CD8-positive, alpha-beta T cell (primary cell): ENCODE measurements at regions of chr17 and their contacts with region 1.

Region 1: GRCh38 chr17:44775136-44775837 is 16.5 kb downstream of the ADAM11 start:
- DNase-seq: peak in 8 of 9 experiments; percentile 92 to 99 (median 98)
- ATAC-seq: peak; percentile 92
- H3K4me3 ChIP-seq: peak overlapping the region; percentile 68 to 97
- H3K4me3 Mint-ChIP-seq: peak overlapping the region; percentile 91
- H3K27ac ChIP-seq: peak overlapping the region in 1 of 2 experiments; percentile 11
- H3K27ac Mint-ChIP-seq: peak overlapping the region; percentile 60
- H3K4me1 ChIP-seq: peaks cover 17% of the 10 kb centered on the region
- H3K4me1 Mint-ChIP-seq: peaks cover 16% of the 10 kb centered on the region
- H3K27me3 ChIP-seq: peaks cover 0 to 10% of the 10 kb centered on the region in 2 experiments
- H3K27me3 Mint-ChIP-seq: peaks cover 7% of the 10 kb centered on the region
- CTCF ChIP-seq: peak; percentile 61

Region 2: GRCh38 chr17:44672479-44673093 is 102.7 kb before region 1 on chr17:
- CTCF ChIA-PET with region 1: no interaction called
- POLR2A ChIA-PET with region 1: no interaction called
- intact Hi-C with region 1: no loop called
- DNase-seq: peak in 1 of 9 experiments; percentile 17
- ATAC-seq: no peak
- H3K4me3 ChIP-seq: no peak overlapping the region
- H3K4me3 Mint-ChIP-seq: no peak overlapping the region
- H3K27ac ChIP-seq: no peak overlapping the region
- H3K27ac Mint-ChIP-seq: no peak overlapping the region
- H3K4me1 ChIP-seq: no peaks in the 10 kb centered on the region
- H3K4me1 Mint-ChIP-seq: no peaks in the 10 kb centered on the region
- H3K27me3 ChIP-seq: no peaks in the 10 kb centered on the region
- H3K27me3 Mint-ChIP-seq: no peaks in the 10 kb centered on the region
- CTCF ChIP-seq: peak; percentile 31

Region 3: DNA sequence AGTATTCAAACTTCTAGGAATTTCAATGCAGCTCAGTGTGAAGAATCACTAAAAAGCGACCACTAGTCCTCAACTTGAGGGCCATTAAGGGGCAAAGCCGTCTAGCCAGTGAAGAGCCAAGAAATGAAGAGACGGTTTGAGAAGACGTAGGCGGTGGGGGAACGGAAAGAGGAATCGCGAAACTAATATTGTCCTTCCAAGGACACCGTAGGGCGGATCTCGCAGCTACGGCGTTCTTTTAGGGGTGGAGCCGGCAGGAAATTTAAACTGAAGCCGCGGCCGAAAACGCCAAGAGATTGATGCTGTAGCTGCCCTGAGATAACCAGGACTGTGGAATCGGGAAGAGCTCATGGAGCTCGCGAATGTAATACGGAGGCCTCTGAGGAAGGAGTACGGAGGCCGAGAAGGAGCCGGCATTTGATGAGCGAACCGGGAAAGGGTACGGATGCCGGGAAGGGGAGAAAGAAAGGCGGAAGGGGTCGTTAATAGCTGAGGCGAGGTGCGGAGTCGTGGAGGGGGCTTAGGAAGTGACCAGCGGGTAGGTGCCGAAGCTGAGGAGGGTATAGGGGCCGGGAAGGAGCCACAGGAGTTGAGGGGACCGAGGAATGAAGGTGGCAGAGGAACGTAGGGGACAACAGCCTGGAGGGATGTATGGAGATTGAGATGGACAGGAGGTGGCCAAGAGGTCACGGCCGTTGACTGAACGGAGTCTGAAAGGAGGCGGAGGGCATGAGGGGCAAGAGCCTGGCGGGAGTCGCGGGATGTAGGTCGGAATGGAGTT is 66.7 kb before region 1 on chr17 and contains the start of gene DBF4B:
- CTCF ChIA-PET with region 1: interaction called, 4 read pairs
- POLR2A ChIA-PET with region 1: interaction called, 3 read pairs
- intact Hi-C with region 1: loop called (anchors 1 kb)
- DNase-seq: peak; percentile 69 to 95 (median 82)
- ATAC-seq: peak; percentile 98
- H3K4me3 ChIP-seq: peak within 1 kb of the TSS; percentile 92 to 95
- H3K4me3 Mint-ChIP-seq: no peak within 1 kb of the TSS
- H3K27ac ChIP-seq: peak within 1 kb of the TSS; percentile 51 to 55
- H3K27ac Mint-ChIP-seq: no peak within 1 kb of the TSS
- H3K4me1 ChIP-seq: peaks cover 13% of the 10 kb centered on the region
- H3K4me1 Mint-ChIP-seq: peaks cover 5% of the 10 kb centered on the region
- H3K27me3 ChIP-seq: no peaks in the 10 kb centered on the region
- H3K27me3 Mint-ChIP-seq: peaks cover 6% of the 10 kb centered on the region
- CTCF ChIP-seq: no peak
- total RNA-seq, gene DBF4B: 0.71 to 1.3 TPM

Region 4: GRCh38 chr17:44878627-44879221 is 103.4 kb after region 1 on chr17:
- CTCF ChIA-PET with region 1: interaction called, 33 read pairs
- POLR2A ChIA-PET with region 1: no interaction called
- intact Hi-C with region 1: loop called in 1 of 2 experiments (anchors 1 kb)
- DNase-seq: peak in 5 of 9 experiments; percentile 19 to 44 (median 27)
- ATAC-seq: no peak
- H3K4me3 ChIP-seq: no peak overlapping the region
- H3K4me3 Mint-ChIP-seq: no peak overlapping the region
- H3K27ac ChIP-seq: no peak overlapping the region
- H3K27ac Mint-ChIP-seq: no peak overlapping the region
- H3K4me1 ChIP-seq: no peaks in the 10 kb centered on the region
- H3K4me1 Mint-ChIP-seq: no peaks in the 10 kb centered on the region
- H3K27me3 ChIP-seq: no peaks in the 10 kb centered on the region
- H3K27me3 Mint-ChIP-seq: no peaks in the 10 kb centered on the region
- CTCF ChIP-seq: peak; percentile 34

Region 5: DNA sequence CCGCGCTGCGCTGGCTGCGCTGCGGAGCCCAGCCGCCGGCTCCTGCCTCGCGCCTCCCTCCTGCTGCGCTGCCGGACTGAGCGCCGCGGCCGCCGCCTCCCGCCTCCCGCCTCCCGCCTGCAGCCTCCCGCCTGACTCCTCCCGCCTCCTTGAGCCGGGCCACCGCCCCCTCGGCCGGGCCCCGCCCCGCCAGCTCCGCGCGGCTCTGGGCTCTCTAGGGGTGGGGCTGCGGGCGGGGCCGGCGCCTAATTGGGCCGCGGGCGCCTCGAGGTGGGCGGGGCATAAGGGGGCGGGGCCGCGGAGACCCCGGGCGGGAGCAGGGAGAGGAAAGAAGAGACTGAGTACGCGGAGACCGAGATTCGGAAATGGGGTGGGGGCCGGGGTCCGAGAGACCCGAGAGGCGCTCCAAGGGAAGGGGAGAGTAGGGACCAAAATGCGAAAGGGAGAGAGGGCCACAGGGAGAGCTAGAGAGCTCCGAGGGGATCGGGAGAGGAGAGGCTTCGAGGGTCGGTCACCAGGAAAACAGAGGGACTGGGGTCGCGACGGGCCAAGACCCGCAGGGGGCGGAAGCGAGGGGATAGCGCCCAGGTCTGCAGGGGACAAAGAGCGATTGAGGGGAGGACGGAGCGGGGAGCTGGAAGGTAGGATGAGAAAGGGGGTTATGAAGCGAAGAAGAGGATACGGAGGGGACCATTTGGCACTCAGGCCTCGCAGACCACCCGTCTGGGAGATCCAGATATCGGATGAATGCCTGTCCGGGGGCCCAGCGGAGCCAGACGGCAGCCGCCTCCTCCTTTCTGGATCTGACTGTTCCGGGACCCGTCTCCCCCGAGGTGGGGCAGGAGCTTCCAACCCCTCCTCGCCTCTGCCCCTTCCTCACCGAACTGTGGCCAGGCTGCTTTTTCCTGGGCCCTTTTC is 193.2 kb after region 1 on chr17 and contains the start of gene C1QL1:
- CTCF ChIA-PET with region 1: interaction called, 3 read pairs
- POLR2A ChIA-PET with region 1: no interaction called
- intact Hi-C with region 1: loop called in 1 of 2 experiments (anchors 5 kb)
- DNase-seq: peak; percentile 67 to 91 (median 82)
- ATAC-seq: peak; percentile 93
- H3K4me3 ChIP-seq: peak within 1 kb of the TSS; percentile 41 to 55
- H3K4me3 Mint-ChIP-seq: peak within 1 kb of the TSS; percentile 76
- H3K27ac ChIP-seq: no peak within 1 kb of the TSS
- H3K27ac Mint-ChIP-seq: no peak within 1 kb of the TSS
- H3K4me1 ChIP-seq: peaks cover 29% of the 10 kb centered on the region
- H3K4me1 Mint-ChIP-seq: peaks cover 36% of the 10 kb centered on the region
- H3K27me3 ChIP-seq: peaks cover 39 to 41% of the 10 kb centered on the region in 2 experiments
- H3K27me3 Mint-ChIP-seq: peaks cover 55% of the 10 kb centered on the region
- CTCF ChIP-seq: no peak
- total RNA-seq, gene C1QL1: not detected

Region 6: DNA sequence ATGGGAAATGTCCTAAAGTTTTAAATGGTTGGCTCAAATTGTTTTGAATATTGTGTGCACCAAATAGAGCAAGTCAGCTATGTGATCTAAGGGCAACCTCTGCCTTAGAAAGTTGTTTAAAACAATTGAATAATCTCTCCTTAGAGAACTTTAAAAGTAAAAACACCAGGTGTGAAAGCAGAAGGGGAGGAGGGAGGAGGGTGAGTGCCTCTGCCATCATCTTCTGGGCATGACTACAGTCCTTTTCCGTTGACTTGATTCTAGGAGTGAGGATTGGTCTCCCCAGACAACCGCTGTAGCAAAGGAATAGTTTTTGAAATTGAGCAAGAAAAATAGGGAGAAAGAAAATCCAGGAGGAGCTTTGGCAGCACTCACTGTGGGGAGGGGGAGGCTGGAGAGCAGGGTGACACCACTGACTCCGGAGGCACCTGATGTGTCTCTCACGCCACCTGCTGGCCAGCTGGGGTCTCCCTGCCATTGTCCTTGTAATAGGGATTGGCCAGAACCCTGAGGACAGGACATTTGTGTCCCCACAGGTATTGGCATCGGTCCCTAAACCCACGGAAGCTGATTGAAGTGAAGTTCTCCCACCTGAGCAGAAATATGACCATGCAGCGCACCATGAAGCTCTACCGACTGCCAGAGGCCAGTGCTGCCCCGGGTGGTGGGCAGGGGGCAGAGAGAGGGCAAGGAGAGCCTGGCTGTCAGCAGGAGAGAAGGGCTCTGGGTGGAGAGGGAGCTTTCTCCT is 323.8 kb after region 1 on chr17:
- CTCF ChIA-PET with region 1: interaction called, 13 read pairs
- POLR2A ChIA-PET with region 1: no interaction called
- intact Hi-C with region 1: loop called (anchors 1 to 2 kb)
- DNase-seq: peak; percentile 48 to 85 (median 74)
- ATAC-seq: peak; percentile 86
- H3K4me3 ChIP-seq: no peak overlapping the region
- H3K4me3 Mint-ChIP-seq: no peak overlapping the region
- H3K27ac ChIP-seq: no peak overlapping the region
- H3K27ac Mint-ChIP-seq: no peak overlapping the region
- H3K4me1 ChIP-seq: no peaks in the 10 kb centered on the region
- H3K4me1 Mint-ChIP-seq: no peaks in the 10 kb centered on the region
- H3K27me3 ChIP-seq: no peaks in the 10 kb centered on the region
- H3K27me3 Mint-ChIP-seq: no peaks in the 10 kb centered on the region
- CTCF ChIP-seq: peak; percentile 83

Region 7: DNA sequence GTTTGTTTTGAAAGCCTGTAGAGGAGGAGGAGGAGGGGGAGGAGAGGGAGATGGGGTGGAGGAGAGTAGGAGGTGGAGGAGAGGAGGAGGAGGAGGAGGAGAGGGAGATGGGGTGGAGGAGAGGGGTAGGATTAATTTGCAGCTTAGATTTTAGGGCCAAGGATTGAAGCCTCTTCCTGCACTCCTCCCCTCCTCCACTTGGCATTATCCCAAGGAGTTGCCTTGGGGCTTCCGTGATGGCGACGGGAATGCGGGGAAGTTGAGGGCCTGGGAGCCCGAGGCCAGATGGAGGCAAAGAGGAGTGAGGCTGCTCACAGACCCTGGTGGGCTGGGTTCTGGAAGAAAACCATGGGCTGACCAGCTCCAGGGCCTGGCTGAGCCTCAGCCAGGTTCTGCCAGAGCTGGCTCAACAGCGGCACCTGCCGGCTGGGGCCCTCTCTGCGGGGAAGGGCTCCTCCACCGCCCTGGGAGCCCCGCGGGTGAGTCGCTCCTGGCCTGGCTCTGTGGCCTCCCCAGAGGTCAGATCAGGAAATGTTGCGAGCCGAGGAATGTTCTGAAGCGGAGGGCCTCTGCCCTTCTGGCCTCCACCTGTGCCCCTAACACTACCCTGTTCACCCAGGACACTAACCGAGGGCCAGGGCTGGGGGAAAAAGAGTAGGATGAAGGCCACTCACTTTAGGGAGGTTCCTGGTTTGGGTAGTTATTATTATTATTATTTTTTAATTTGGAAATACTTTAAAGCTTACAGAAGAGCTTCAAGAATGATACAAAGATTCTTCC is 422.5 kb after region 1 on chr17:
- CTCF ChIA-PET with region 1: interaction called, 3 read pairs
- POLR2A ChIA-PET with region 1: no interaction called
- intact Hi-C with region 1: loop called in 1 of 2 experiments (anchors 2 kb)
- DNase-seq: peak; percentile 75 to 93 (median 86)
- ATAC-seq: peak; percentile 100
- H3K4me3 ChIP-seq: no peak overlapping the region
- H3K4me3 Mint-ChIP-seq: no peak overlapping the region
- H3K27ac ChIP-seq: no peak overlapping the region
- H3K27ac Mint-ChIP-seq: no peak overlapping the region
- H3K4me1 ChIP-seq: peaks cover 7% of the 10 kb centered on the region
- H3K4me1 Mint-ChIP-seq: peaks cover 4% of the 10 kb centered on the region
- H3K27me3 ChIP-seq: no peaks in the 10 kb centered on the region
- H3K27me3 Mint-ChIP-seq: no peaks in the 10 kb centered on the region
- CTCF ChIP-seq: peak; percentile 85